Breast epithelium (tissue), 4 donors: ENCODE measurements at regions of chr10 and their contacts with region 1.

Region 1: GRCh38 chr10:21039721-21040120 is 142.6 kb upstream of the NEBL start:
- DNase-seq: no peak
- H3K4me3 ChIP-seq: no peak overlapping the region
- H3K27ac ChIP-seq: no peak overlapping the region
- H3K4me1 ChIP-seq: no peaks in the 10 kb centered on the region
- H3K27me3 ChIP-seq: no peaks in the 10 kb centered on the region
- CTCF ChIP-seq: no peak
- POLR2A ChIP-seq: no peak

Region 2: DNA sequence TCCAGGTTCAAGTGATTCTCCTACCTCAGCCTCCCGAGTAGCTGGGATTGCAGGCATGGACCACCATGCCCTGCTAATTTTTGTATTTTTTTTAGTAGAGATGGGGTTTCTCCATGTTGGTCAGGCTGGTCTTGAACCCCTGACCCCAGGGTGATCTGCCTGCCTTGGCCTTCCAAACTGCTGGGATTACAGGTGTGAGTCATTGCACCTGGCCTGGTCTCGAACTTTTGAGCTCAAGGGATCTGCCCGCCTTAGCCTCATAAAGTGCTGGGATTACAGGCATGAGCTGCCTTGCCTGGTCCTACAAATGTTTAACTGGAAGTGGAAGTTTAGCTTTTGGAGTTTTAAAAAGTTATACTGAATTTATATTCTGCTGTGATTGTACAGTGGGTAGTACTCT is 497.2 kb after region 1 on chr10:
- intact Hi-C with region 1: no loop called
- DNase-seq: no peak
- H3K4me3 ChIP-seq: no peak overlapping the region
- H3K27ac ChIP-seq: no peak overlapping the region
- H3K4me1 ChIP-seq: peaks cover 0 to 8% of the 10 kb centered on the region in 2 donors
- H3K27me3 ChIP-seq: no peaks in the 10 kb centered on the region
- CTCF ChIP-seq: no peak
- POLR2A ChIP-seq: no peak

Region 3: GRCh38 chr10:21604651-21605050 is 564.9 kb after region 1 on chr10:
- intact Hi-C with region 1: loop called (anchors 5 kb)
- DNase-seq: no peak
- H3K4me3 ChIP-seq: no peak overlapping the region
- H3K27ac ChIP-seq: no peak overlapping the region
- H3K4me1 ChIP-seq: no peaks in the 10 kb centered on the region
- H3K27me3 ChIP-seq: no peaks in the 10 kb centered on the region
- CTCF ChIP-seq: no peak
- POLR2A ChIP-seq: no peak

Region 4: GRCh38 chr10:21675157-21675796 is 635.6 kb after region 1 on chr10:
- intact Hi-C with region 1: no loop called
- DNase-seq: no peak
- H3K4me3 ChIP-seq: no peak overlapping the region
- H3K27ac ChIP-seq: no peak overlapping the region
- H3K4me1 ChIP-seq: no peaks in the 10 kb centered on the region
- H3K27me3 ChIP-seq: no peaks in the 10 kb centered on the region
- CTCF ChIP-seq: peak; percentile 14 to 43 (median 20)
- POLR2A ChIP-seq: no peak